Endothelial cell of umbilical vein (primary cell): ENCODE measurements at regions of chr9 and their contacts with region 1.

Region 1: GRCh38 chr9:122453677-122454135 is 24.0 kb downstream of the OR1J1 start:
- DNase-seq: peak; percentile 27
- H3K4me3 ChIP-seq: no peak overlapping the region
- H3K27ac ChIP-seq: no peak overlapping the region
- H3K4me1 ChIP-seq: peaks cover 6% of the 10 kb centered on the region
- H3K27me3 ChIP-seq: peaks cover 2 to 7% of the 10 kb centered on the region in 2 experiments
- CTCF ChIP-seq: no peak
- POLR2A ChIP-seq: no peak

Region 2: GRCh38 chr9:122248448-122248915 is 205.2 kb before region 1 on chr9:
- CTCF ChIA-PET with region 1: interaction called, 5 read pairs
- POLR2A ChIA-PET with region 1: no interaction called
- dilution Hi-C with region 1: no loop called
- intact Hi-C with region 1: loop called (anchors 10 kb)
- DNase-seq: peak; percentile 78
- H3K4me3 ChIP-seq: no peak overlapping the region
- H3K27ac ChIP-seq: peak overlapping the region; percentile 75
- H3K4me1 ChIP-seq: peaks cover 34% of the 10 kb centered on the region
- H3K27me3 ChIP-seq: no peaks in the 10 kb centered on the region
- CTCF ChIP-seq: no peak
- POLR2A ChIP-seq: no peak

Region 3: DNA sequence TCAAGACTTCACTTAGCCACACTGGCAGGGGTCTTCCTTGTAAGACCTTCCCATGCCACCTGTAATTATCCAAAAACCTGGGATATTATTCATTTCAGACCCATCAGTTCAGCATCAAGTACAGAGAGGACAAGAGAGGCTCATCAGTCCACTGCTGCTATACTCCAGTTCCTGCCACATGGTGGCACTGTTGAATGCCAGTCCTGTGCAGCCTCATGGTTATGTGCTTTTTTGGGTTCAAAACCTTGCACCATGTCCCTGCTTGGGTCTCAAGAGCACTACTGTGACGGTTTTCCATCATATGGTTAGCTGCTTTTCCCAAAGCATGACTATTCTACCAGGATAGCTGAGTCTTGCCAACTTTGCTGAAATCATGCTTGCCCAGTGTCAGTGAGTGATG is 74.4 kb before region 1 on chr9:
- CTCF ChIA-PET with region 1: interaction called, 13 read pairs
- POLR2A ChIA-PET with region 1: no interaction called
- dilution Hi-C with region 1: no loop called
- intact Hi-C with region 1: loop called (anchors 1 kb)
- DNase-seq: no peak
- H3K4me3 ChIP-seq: no peak overlapping the region
- H3K27ac ChIP-seq: no peak overlapping the region
- H3K4me1 ChIP-seq: peaks cover 41% of the 10 kb centered on the region
- H3K27me3 ChIP-seq: no peaks in the 10 kb centered on the region
- CTCF ChIP-seq: peak; percentile 15 to 23
- POLR2A ChIP-seq: no peak

Region 4: GRCh38 chr9:122619996-122620395 is 166.3 kb after region 1 on chr9:
- CTCF ChIA-PET with region 1: no interaction called
- POLR2A ChIA-PET with region 1: no interaction called
- dilution Hi-C with region 1: no loop called
- intact Hi-C with region 1: no loop called
- DNase-seq: peak; percentile 36
- H3K4me3 ChIP-seq: no peak overlapping the region
- H3K27ac ChIP-seq: no peak overlapping the region
- H3K4me1 ChIP-seq: no peaks in the 10 kb centered on the region
- H3K27me3 ChIP-seq: peaks cover 4 to 5% of the 10 kb centered on the region in 2 experiments
- CTCF ChIP-seq: no peak
- POLR2A ChIP-seq: no peak